ENCODE measurements at regions of chr20 and their contacts with region 1.

Region 1: GRCh38 chr20:53738039-53738944 is 144.7 kb upstream of the ZNF217 start:
- DNase-seq: peak; percentile 98
- ATAC-seq: peak; percentile 74
- H3K4me3 ChIP-seq: peak overlapping the region; percentile 61
- H3K27ac ChIP-seq: peak overlapping the region; percentile 87
- H3K4me1 ChIP-seq: peaks cover 70% of the 10 kb centered on the region
- H3K27me3 ChIP-seq: no peaks in the 10 kb centered on the region
- CTCF ChIP-seq: no peak

Region 2: DNA sequence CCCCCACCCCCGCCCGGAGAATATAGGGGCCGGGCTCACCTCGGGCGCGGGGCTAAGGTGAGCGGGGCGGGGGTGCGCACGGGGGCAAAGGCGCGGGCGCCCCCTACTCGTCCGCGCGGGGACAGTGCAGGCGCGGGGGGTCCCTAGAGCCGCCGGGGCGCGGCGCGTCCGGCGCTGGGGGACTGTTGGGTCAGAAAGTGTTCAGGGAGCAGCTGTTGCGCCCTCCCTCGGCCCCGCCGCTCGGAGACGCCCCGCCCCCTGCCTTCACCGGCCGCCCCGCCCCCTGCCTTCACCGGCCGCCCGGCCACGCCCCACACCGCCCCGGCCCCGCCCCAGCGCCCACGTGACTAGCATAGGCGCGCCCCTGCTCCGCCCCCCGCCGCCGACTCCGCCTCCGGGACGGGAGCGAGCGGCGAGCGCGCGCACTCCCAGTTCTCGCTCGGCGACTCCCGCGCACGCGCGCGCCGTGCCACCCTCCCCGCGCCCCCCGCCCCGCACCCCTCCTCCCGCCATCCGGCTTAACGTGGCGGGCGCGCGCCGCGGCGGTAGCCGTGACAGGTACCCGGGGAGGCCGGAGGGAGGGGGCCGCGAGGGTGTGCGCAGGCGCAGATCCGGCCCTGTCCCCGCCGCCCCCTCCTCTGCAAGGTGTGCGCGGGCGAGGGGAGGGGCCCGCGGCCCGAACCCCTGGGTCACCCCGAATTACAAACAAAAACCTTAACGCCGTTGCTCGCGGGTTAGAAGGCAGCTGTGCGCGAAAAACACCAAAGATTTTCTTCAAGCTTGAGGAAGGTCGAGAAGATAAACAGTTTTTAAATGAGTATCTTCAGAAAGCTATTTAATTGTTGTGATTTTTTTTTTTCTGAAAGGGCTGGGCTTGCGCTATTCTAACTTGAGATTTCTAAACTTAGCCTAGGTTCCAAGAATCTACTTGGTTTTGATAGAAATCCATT is 143.9 kb before region 1 on chr20:
- CTCF ChIA-PET with region 1: interaction called, 6 read pairs
- POLR2A ChIA-PET with region 1: interaction called, 19 read pairs
- intact Hi-C with region 1: loop called (anchors 2 kb)
- DNase-seq: peak; percentile 98
- ATAC-seq: peak; percentile 69
- H3K4me3 ChIP-seq: peak overlapping the region; percentile 88
- H3K27ac ChIP-seq: peak overlapping the region; percentile 65
- H3K4me1 ChIP-seq: peaks cover 41% of the 10 kb centered on the region
- H3K27me3 ChIP-seq: no peaks in the 10 kb centered on the region
- CTCF ChIP-seq: no peak

Region 3: DNA sequence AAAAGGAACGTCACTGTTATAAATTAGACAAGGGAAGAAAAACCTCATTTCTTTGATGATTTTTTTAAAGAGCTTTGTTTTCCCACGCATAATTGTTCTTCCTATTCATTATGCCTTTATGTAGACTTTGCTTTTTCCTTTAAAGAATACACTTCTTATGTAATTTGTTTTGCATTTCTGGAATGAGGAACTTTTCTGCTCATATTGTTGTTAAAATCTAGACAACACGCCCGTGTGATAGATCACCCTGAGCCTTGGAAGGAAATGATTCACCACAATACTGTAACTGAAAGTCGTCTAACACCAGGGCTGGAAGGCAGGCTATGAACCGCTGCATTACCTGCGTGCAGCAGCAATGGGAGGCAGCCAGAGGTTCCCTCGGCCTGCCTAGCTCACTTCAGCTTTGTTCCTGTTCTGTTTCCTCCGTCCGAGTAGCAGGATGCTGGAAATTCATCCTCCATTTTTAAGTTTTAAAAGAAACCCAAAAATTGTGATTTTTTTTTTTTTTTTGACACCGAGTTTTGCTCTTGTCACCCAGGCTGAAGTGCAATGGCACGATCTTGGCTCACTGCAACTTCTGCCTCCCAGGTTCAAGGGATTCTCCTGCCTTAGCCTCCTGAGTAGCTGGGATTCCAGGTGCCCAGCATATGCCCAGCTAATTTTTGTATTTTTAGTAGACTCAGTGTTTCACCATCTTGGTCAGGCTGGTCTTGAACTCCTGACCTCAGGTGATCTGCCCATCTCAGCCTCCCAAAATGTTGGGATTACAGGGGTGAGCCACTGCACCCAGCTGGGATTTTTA is 95.1 kb before region 1 on chr20:
- CTCF ChIA-PET with region 1: interaction called, 5 read pairs
- POLR2A ChIA-PET with region 1: interaction called, 4 read pairs
- intact Hi-C with region 1: loop called (anchors 5 kb)
- DNase-seq: peak; percentile 94
- ATAC-seq: peak; percentile 92
- H3K4me3 ChIP-seq: peak overlapping the region; percentile 51
- H3K27ac ChIP-seq: peak overlapping the region; percentile 80
- H3K4me1 ChIP-seq: peaks cover 32% of the 10 kb centered on the region
- H3K27me3 ChIP-seq: no peaks in the 10 kb centered on the region
- CTCF ChIP-seq: no peak

Region 4: GRCh38 chr20:53712212-53713080 is 25.8 kb before region 1 on chr20:
- CTCF ChIA-PET with region 1: no interaction called
- POLR2A ChIA-PET with region 1: no interaction called
- intact Hi-C with region 1: no loop called
- DNase-seq: no peak
- ATAC-seq: no peak
- H3K4me3 ChIP-seq: no peak overlapping the region
- H3K27ac ChIP-seq: no peak overlapping the region
- H3K4me1 ChIP-seq: peaks cover 15% of the 10 kb centered on the region
- H3K27me3 ChIP-seq: no peaks in the 10 kb centered on the region
- CTCF ChIP-seq: no peak

Region 5: DNA sequence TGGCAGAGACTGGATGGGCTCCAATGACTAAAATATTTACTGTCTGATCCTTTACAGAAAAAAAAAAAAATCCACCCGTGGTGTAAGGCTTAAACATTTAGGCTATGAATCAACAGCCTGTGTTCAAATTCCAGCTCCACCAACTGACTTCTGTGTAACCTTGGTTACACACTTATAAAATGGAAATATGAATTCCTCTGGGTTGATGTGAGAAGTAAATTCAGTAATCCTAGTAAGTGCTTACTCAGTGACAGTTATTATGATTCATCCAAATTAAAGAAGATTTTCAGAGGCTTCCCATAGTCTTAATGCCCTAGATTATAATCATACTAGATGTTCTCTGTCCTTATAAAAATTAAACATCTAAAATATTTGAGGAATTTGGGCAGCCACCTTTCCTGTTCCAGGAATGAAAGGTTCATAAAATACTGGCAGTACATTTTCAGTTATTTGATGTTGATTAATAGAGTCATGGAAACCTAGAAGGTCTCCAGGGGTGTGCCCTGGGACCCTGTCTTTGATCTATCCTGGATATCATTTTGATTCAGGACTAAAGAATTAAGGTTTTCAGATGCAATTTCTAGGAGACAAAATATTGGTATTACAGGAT is 35.6 kb after region 1 on chr20:
- CTCF ChIA-PET with region 1: no interaction called
- POLR2A ChIA-PET with region 1: interaction called, 27 read pairs
- intact Hi-C with region 1: loop called (anchors 1 kb)
- DNase-seq: peak; percentile 100
- ATAC-seq: peak; percentile 75
- H3K4me3 ChIP-seq: peak overlapping the region; percentile 54
- H3K27ac ChIP-seq: peak overlapping the region; percentile 92
- H3K4me1 ChIP-seq: peaks cover 48% of the 10 kb centered on the region
- H3K27me3 ChIP-seq: no peaks in the 10 kb centered on the region
- CTCF ChIP-seq: no peak

Region 6: DNA sequence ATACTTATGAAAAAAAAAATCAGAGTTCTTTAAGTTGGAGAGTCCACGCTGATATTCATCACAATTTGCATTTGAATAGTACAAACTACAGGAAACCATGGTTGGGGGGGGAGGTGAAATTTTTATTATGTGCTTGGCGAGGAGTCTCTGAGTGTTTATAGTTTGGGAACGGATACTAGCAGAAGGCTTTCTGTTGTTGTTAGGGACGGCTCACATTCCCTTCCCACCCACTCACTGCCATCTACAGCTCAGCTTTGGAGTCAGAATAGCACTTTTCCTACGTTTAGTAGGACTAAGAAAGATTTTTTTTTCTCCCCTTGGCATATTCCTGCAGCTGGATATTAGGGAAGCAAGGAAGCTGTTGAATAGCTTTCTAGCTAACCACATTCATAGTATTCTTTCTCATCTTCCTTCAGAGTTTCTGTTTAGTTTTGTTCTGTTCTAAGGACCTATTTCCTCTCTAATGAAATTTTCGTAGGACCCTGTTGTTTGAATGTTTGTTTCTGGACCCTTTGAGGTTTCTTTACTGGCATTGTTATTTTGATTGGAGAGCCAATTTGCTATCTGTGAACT is 90.5 kb after region 1 on chr20:
- CTCF ChIA-PET with region 1: no interaction called
- POLR2A ChIA-PET with region 1: interaction called, 3 read pairs
- intact Hi-C with region 1: loop called (anchors 1 kb)
- DNase-seq: peak; percentile 93
- ATAC-seq: peak; percentile 77
- H3K4me3 ChIP-seq: peak overlapping the region; percentile 61
- H3K27ac ChIP-seq: peak overlapping the region; percentile 93
- H3K4me1 ChIP-seq: peaks cover 49% of the 10 kb centered on the region
- H3K27me3 ChIP-seq: no peaks in the 10 kb centered on the region
- CTCF ChIP-seq: peak; percentile 62

Region 7: GRCh38 chr20:54062812-54063280 is 324.6 kb after region 1 on chr20:
- CTCF ChIA-PET with region 1: no interaction called
- POLR2A ChIA-PET with region 1: no interaction called
- intact Hi-C with region 1: loop called (anchors 10 kb)
- DNase-seq: peak; percentile 79
- ATAC-seq: peak; percentile 49
- H3K4me3 ChIP-seq: no peak overlapping the region
- H3K27ac ChIP-seq: no peak overlapping the region
- H3K4me1 ChIP-seq: peaks cover 15% of the 10 kb centered on the region
- H3K27me3 ChIP-seq: no peaks in the 10 kb centered on the region
- CTCF ChIP-seq: peak; percentile 95